Activated CD4-positive, alpha-beta memory T cell treated with anti-CD3 and anti-CD28 coated beads, Interleukin-2, amount 10 ng/mL, durations not matched to agents 7 days and 5 days (primary cell): ENCODE measurements at regions of chr19 and their contacts with region 1.

Region 1: DNA sequence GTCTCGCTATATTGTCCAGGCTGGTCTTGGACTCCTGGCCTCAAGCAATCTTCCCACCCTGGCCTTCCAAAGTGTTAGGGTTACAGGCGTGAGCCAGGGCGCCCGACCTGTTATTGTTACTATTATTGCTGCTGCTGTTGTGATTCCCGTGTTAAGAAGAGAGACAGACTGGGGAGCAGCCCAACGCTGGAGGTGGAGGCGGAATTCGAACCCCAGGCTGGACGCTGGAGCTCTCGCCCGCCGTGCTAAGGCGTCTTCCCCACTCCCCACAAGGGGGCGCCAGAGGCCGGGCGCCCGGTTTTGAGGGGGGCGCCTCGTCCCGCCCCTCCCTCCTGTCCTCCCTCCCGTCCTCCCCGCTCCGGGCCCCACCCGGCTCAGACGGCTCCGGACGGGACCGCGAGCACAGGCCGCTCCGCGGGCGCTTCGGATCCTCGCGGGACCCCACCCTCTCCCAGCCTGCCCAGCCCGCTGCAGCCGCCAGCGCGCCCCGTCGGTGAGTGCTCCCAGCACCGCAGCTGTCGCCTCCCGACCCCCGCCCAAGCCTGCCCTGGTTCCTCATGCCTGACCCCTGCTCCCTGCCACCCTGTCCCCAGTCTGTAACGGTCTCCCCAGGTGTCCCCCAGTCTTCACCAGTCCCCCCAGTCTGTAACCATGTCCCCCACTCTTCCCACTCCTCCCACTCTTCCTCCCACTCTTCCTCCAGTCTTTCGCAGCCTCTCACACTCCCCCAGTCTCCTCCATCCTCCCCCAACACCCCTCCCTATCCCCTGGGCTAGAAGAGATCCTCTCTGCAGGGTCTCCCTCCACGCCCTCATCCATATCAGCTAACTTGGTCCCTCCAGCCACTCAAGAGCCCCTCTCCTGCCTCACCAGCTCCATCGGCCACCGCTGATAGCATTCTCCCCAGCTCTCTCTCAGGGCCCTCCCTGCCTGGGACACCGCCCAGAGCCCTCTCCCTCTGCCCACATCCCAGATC is at the start of gene EHD2:
- DNase-seq: peak; percentile 38
- H3K4me3 Mint-ChIP-seq: no peak within 1 kb of the TSS
- H3K27ac Mint-ChIP-seq: no peak within 1 kb of the TSS
- H3K4me1 Mint-ChIP-seq: peaks cover 13% of the 10 kb centered on the region
- H3K27me3 Mint-ChIP-seq: peaks cover 31% of the 10 kb centered on the region
- total RNA-seq, gene EHD2: not detected

Region 2: GRCh38 chr19:47745010-47745901 is 31.9 kb after region 1 on chr19 and contains the start of gene NOP53:
- CTCF ChIA-PET with region 1: interaction called, 28 read pairs
- POLR2A ChIA-PET with region 1: interaction called, 5 read pairs
- DNase-seq: peak; percentile 97
- H3K4me3 Mint-ChIP-seq: peak within 1 kb of the TSS; percentile 84
- H3K27ac Mint-ChIP-seq: peak within 1 kb of the TSS; percentile 94
- H3K4me1 Mint-ChIP-seq: peaks cover 53% of the 10 kb centered on the region
- H3K27me3 Mint-ChIP-seq: no peaks in the 10 kb centered on the region
- total RNA-seq, gene NOP53: 257 to 271 TPM